Sigmoid colon (tissue), 7 donors: ENCODE measurements at regions of chr11 and their contacts with region 1.

Region 1: DNA sequence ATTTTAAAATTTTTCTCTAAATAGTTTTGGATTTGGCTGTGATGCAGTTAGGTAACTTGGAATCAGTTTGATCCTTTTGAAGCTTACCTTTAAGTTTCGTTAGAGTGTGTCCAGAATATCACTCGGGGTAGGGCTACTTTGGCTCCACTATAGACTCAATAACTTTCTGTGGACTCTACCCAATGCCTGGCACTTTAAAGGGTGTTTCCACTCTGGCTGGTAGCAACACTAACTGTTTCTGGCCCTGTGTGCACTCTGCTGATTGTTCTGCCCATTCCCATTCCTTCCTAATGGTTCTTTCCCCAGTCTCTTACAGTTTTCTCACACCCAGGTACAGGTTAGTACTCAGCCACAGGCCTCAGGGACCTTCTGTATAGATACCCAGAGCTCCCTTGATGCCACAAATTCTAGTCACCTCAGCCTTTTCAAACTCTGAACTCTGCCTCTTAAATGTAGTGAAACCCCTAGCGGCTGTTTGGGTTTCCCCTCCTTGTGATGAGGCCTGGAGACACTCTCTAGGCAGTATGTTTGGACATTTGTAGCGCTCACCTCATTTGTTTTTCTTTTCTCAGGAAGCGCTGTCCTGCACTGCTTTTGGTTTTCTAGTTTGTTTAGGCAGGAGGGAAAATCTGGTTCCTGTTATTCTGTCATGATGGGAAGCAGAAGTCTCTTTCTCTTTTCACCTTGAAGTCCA is 16.8 kb downstream of the CUL5 start:
- DNase-seq: no peak
- H3K4me3 ChIP-seq: peak overlapping the region in 1 of 4 donors; percentile 5
- H3K27ac ChIP-seq: peak overlapping the region; percentile 33 to 79 (median 68)
- H3K4me1 ChIP-seq: peaks cover 0 to 64% (median 27%) of the 10 kb centered on the region in 4 donors
- H3K27me3 ChIP-seq: no peaks in the 10 kb centered on the region
- CTCF ChIP-seq: peak in 2 of 4 experiments; percentile 29 to 42
- EP300 ChIP-seq: peak in 3 of 4 donors; percentile 5 to 85 (median 31)
- POLR2A ChIP-seq: no peak

Region 2: GRCh38 chr11:107840129-107840484 is 185.4 kb before region 1 on chr11:
- intact Hi-C with region 1: no loop called
- DNase-seq: no peak
- H3K4me3 ChIP-seq: no peak overlapping the region
- H3K27ac ChIP-seq: peak overlapping the region; percentile 58 to 77 (median 72)
- H3K4me1 ChIP-seq: peaks cover 0 to 18% (median 16%) of the 10 kb centered on the region in 4 donors
- H3K27me3 ChIP-seq: no peaks in the 10 kb centered on the region
- CTCF ChIP-seq: no peak
- EP300 ChIP-seq: no peak
- POLR2A ChIP-seq: no peak

Region 3: DNA sequence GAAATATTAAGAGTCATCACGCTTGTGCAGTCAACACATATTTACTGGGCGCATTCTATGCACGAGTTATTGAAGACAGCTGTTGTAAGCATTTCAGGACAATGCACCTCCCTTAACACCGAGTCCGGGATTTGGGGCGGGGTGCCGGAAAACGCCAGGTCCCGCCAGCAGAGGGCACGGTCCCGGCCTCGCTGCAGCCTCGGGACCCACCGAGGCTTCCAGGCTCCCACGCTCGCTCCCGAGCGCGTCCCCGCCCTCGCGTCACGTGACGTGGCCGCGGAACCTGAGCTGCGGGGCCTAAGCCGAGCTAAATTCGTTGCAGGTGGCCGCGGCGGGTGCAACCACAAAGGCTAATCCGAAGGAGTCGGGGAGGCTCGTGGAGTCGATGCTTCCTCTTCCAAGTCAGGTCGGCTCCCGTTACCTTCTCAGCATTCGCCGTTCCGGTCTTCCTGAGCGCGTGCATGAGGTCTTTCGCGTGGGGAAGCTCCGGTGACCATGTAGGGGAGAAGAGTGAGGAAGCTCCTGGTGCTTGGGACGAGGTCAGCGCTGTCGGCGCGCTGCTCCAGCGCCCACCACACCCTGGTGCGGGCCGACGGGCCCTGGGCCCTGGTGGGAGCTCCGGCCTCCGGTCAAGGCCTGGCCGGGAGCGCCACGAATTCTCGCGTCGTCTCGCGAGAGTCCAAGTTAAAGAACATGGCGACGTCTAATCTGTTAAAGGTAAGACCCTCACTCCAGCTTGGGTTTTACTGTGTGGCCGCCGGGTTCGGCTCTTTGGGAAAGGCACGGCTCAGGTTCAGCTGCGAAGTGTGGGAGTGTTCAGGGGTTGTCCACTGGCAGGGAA is 16.7 kb before region 1 on chr11 and contains the start of gene CUL5:
- intact Hi-C with region 1: loop called (anchors 2 kb)
- DNase-seq: peak; percentile 96
- H3K4me3 ChIP-seq: peak within 1 kb of the TSS; percentile 83 to 99 (median 85)
- H3K27ac ChIP-seq: peak within 1 kb of the TSS; percentile 97 to 99 (median 98)
- H3K4me1 ChIP-seq: peaks cover 0 to 46% (median 37%) of the 10 kb centered on the region in 4 donors
- H3K27me3 ChIP-seq: no peaks in the 10 kb centered on the region
- CTCF ChIP-seq: peak; percentile 59 to 90 (median 80)
- EP300 ChIP-seq: peak in 1 of 4 donors; percentile 18
- POLR2A ChIP-seq: peak in 1 of 2 donors; percentile 54
- total RNA-seq, gene CUL5: 26.5 to 33.7 (median 29.6) TPM

Region 4: DNA sequence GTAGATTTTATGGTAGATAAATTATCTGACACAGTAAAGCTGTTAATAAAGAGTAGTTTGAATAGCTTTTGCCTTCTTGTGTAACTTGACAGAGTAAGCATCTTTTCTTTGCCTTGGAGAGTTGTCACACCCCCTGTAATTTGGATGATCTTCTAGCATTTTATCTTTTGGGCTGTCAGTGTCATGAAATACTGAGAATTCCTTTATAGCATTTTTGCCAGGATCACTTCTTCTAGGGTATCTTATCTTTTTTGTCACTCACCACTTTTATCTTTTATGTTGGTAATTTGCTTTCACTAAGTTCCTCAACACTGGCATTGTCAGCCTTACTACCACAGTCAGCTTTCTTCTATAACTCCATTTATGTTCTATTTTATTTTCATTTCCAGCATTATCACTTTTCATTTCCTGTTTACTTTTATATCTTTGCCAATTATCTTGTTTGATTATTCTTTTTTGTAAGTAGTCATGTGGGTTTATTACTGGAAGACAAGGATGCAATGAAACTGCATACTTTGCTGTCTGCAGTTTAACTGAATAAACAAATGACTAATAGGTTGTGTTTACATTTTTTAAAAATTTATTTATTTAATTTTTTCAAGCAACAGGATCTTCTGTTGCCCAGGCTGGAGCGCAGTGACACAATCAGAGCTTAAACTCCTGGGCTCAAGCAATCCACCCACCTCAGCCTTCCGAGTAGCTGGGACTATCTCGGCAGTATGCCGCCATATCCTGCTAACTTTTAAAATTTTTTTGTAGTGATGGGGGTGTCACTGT is 67.8 kb after region 1 on chr11:
- intact Hi-C with region 1: no loop called
- DNase-seq: no peak
- H3K4me3 ChIP-seq: no peak overlapping the region
- H3K27ac ChIP-seq: no peak overlapping the region
- H3K4me1 ChIP-seq: no peaks in the 10 kb centered on the region
- H3K27me3 ChIP-seq: no peaks in the 10 kb centered on the region
- CTCF ChIP-seq: no peak
- EP300 ChIP-seq: no peak
- POLR2A ChIP-seq: no peak

Region 5: GRCh38 chr11:108125096-108125495 is 99.6 kb after region 1 on chr11:
- intact Hi-C with region 1: no loop called
- DNase-seq: no peak
- H3K4me3 ChIP-seq: no peak overlapping the region
- H3K27ac ChIP-seq: no peak overlapping the region
- H3K4me1 ChIP-seq: peaks cover 0 to 39% (median 34%) of the 10 kb centered on the region in 4 donors
- H3K27me3 ChIP-seq: no peaks in the 10 kb centered on the region
- CTCF ChIP-seq: no peak
- EP300 ChIP-seq: no peak
- POLR2A ChIP-seq: no peak